Transverse colon (tissue), 4 donors: ENCODE measurements at regions of chr12 and their contacts with region 1.

Region 1: DNA sequence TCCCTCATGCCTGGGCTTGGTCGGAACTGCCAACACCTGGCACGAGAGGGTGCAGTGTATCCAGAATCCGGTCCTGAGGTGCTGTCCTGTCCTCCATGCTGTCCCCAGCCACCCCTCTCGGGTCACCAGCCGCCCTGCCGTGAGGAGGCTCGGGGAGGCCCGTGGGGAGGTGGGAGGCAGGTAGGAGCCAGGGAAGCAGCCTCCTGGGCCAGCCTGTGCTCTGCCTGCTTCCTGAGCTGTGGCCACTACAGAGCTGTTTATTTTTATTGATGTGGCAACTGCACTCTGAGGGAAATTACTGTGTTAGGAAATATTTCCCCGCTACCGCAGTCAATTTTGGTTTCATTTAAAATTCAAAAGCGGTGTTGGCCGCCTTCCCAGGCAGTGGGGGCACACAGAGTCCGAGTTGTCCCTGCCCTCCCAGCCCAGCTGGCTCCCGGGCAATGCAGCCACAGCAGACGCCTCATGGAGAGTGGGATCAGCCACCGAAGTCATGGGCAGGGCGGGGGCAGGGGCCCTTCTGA is 18.3 kb downstream of the NOC4L start:
- DNase-seq: no peak
- H3K4me3 ChIP-seq: no peak overlapping the region
- H3K27ac ChIP-seq: no peak overlapping the region
- H3K4me1 ChIP-seq: peaks cover 0 to 8% (median 4%) of the 10 kb centered on the region in 4 donors
- H3K27me3 ChIP-seq: peaks cover 7% of the 10 kb centered on the region
- CTCF ChIP-seq: no peak
- EP300 ChIP-seq: no peak
- POLR2A ChIP-seq: no peak

Region 2: GRCh38 chr12:131264625-131265024 is 897.9 kb before region 1 on chr12:
- in situ Hi-C with region 1: no loop called
- intact Hi-C with region 1: loop called (anchors 5 kb)
- DNase-seq: no peak
- H3K4me3 ChIP-seq: no peak overlapping the region
- H3K27ac ChIP-seq: no peak overlapping the region
- H3K4me1 ChIP-seq: no peaks in the 10 kb centered on the region
- H3K27me3 ChIP-seq: no peaks in the 10 kb centered on the region
- CTCF ChIP-seq: no peak
- EP300 ChIP-seq: no peak
- POLR2A ChIP-seq: no peak

Region 3: GRCh38 chr12:132189378-132190011 is 26.9 kb after region 1 on chr12:
- in situ Hi-C with region 1: no loop called
- intact Hi-C with region 1: no loop called
- DNase-seq: peak; percentile 95
- H3K4me3 ChIP-seq: peak overlapping the region; percentile 22 to 60 (median 46)
- H3K27ac ChIP-seq: peak overlapping the region; percentile 63 to 83 (median 70)
- H3K4me1 ChIP-seq: peaks cover 0 to 17% (median 13%) of the 10 kb centered on the region in 4 donors
- H3K27me3 ChIP-seq: peaks cover 31% of the 10 kb centered on the region
- CTCF ChIP-seq: no peak
- EP300 ChIP-seq: no peak
- POLR2A ChIP-seq: no peak